Adrenal gland (tissue), 19 donors: ENCODE measurements at regions of chr13 and their contacts with region 1.

Region 1: DNA sequence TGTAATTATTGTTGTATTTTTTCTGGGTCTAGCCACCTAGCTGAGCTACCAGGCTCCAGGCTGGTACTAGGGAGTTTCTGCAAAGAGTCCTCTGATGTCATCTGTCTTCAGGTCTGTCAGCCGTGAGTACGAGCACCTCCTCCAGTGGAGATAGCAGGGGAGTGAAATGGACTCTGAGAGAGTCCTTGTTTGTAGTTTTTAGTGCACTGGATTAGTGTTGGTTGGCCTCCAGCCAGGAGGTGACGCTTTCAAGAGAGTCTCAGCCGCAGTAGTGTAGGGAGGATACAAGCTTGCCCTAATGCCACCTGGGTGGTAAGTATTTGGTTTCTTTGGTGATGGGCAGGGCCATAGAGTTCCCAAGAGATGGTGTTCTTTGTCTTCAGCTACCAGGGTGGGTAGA is 384.8 kb downstream of the SLC7A1 start:
- DNase-seq: no peak
- H3K4me3 ChIP-seq: no peak overlapping the region
- H3K27ac ChIP-seq: no peak overlapping the region
- H3K4me1 ChIP-seq: no peaks in the 10 kb centered on the region
- H3K27me3 ChIP-seq: no peaks in the 10 kb centered on the region
- CTCF ChIP-seq: no peak
- POLR2A ChIP-seq: no peak

Region 2: GRCh38 chr13:29354377-29354776 is 143.7 kb after region 1 on chr13:
- intact Hi-C with region 1: loop called in 1 of 2 experiments (anchors 5 kb)
- DNase-seq: no peak
- H3K4me3 ChIP-seq: no peak overlapping the region
- H3K27ac ChIP-seq: no peak overlapping the region
- H3K4me1 ChIP-seq: no peaks in the 10 kb centered on the region
- H3K27me3 ChIP-seq: no peaks in the 10 kb centered on the region
- CTCF ChIP-seq: no peak
- POLR2A ChIP-seq: no peak